CD14-positive monocyte (primary cell): ENCODE measurements at regions of chr16 and their contacts with region 1.

Region 1: GRCh38 chr16:85528528-85529387 is 84.4 kb upstream of the GSE1 start:
- DNase-seq: peak; percentile 23 to 45 (median 32)
- H3K4me3 ChIP-seq: no peak overlapping the region
- H3K4me3 Mint-ChIP-seq: peak overlapping the region; percentile 9 to 42
- H3K27ac ChIP-seq: no peak overlapping the region
- H3K27ac Mint-ChIP-seq: no peak overlapping the region
- H3K4me1 ChIP-seq: peaks cover 20 to 32% of the 10 kb centered on the region in 2 donors
- H3K4me1 Mint-ChIP-seq: peaks cover 23% of the 10 kb centered on the region
- H3K27me3 ChIP-seq: no peaks in the 10 kb centered on the region
- H3K27me3 Mint-ChIP-seq: peaks cover 3 to 5% (median 4%) of the 10 kb centered on the region in 3 donors
- CTCF ChIP-seq: peak; percentile 70

Region 2: GRCh38 chr16:85437166-85438055 is 91.3 kb before region 1 on chr16:
- intact Hi-C with region 1: no loop called
- DNase-seq: peak in 1 of 3 donors; percentile 13
- H3K4me3 ChIP-seq: no peak overlapping the region
- H3K4me3 Mint-ChIP-seq: peak overlapping the region in 1 of 2 donors; percentile 4
- H3K27ac ChIP-seq: no peak overlapping the region
- H3K27ac Mint-ChIP-seq: no peak overlapping the region
- H3K4me1 ChIP-seq: peaks cover 9 to 10% of the 10 kb centered on the region in 2 donors
- H3K4me1 Mint-ChIP-seq: peaks cover 10% of the 10 kb centered on the region
- H3K27me3 ChIP-seq: no peaks in the 10 kb centered on the region
- H3K27me3 Mint-ChIP-seq: peaks cover 2 to 6% (median 4%) of the 10 kb centered on the region in 3 donors
- CTCF ChIP-seq: no peak

Region 3: DNA sequence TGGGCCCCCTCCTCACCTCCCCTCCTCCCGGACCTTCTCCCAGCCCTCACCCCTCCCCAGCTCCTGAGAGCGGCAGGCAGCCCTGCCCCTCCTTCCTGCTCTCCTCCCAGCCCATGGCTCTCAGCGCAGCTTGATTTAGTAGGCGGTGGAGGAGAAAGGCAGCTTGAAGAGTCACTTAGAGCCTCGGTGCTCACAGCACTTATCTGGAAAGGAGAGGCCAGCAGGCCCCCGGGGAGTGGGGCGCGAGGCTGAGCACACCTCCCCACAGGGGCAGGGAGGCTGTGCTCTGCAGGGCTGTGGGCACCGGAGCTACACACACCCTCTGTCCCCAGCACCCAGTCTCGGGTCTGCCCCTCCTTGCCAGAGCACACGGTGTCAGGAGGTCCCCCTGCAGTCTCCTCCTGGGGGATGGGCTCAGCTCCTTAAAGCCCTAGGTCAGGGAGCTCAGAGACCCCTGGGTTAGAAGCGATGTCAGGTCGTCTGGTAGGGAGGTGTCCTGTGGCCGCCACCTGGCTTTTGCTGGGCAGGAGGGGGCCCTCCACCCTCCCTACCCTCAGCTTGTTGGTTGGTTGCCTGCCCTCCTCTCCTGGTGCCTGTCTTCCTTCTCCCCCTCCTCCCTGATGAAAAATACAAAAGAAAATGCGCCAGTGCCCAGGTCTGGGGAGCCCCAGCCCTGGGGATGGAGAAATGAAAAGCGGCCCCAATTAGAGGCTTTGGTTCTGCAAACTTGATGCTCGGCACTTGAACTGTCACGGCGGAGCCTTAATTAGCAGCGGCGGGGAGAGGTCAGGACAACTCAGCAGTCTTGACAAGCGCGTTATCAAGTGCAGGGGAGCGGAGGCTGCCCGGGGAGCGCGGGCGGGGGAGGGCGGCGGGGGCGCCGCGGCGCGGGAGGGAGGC is 66.7 kb before region 1 on chr16:
- intact Hi-C with region 1: no loop called
- DNase-seq: peak in 2 of 3 donors; percentile 8 to 11
- H3K4me3 ChIP-seq: no peak overlapping the region
- H3K4me3 Mint-ChIP-seq: peak overlapping the region; percentile 35 to 69
- H3K27ac ChIP-seq: no peak overlapping the region
- H3K27ac Mint-ChIP-seq: no peak overlapping the region
- H3K4me1 ChIP-seq: peaks cover 3 to 9% of the 10 kb centered on the region in 2 donors
- H3K4me1 Mint-ChIP-seq: peaks cover 9% of the 10 kb centered on the region
- H3K27me3 ChIP-seq: peaks cover 13 to 49% of the 10 kb centered on the region in 2 donors
- H3K27me3 Mint-ChIP-seq: peaks cover 40 to 59% (median 50%) of the 10 kb centered on the region in 3 donors
- CTCF ChIP-seq: no peak

Region 4: GRCh38 chr16:85569615-85570212 is 41.0 kb after region 1 on chr16:
- intact Hi-C with region 1: loop called in 1 of 2 experiments (anchors 5 kb)
- DNase-seq: peak in 2 of 3 donors; percentile 17 to 20
- H3K4me3 ChIP-seq: peak overlapping the region in 1 of 3 experiments; percentile 58
- H3K4me3 Mint-ChIP-seq: peak overlapping the region; percentile 70 to 80
- H3K27ac ChIP-seq: peak overlapping the region; percentile 85 to 94
- H3K27ac Mint-ChIP-seq: peak overlapping the region; percentile 94 to 97 (median 95)
- H3K4me1 ChIP-seq: peaks cover 77 to 89% of the 10 kb centered on the region in 2 donors
- H3K4me1 Mint-ChIP-seq: peaks cover 93% of the 10 kb centered on the region
- H3K27me3 ChIP-seq: no peaks in the 10 kb centered on the region
- H3K27me3 Mint-ChIP-seq: peaks cover 1 to 3% (median 2%) of the 10 kb centered on the region in 3 donors
- CTCF ChIP-seq: no peak

Region 5: GRCh38 chr16:85986931-85987749 is 458.4 kb after region 1 on chr16:
- intact Hi-C with region 1: no loop called
- DNase-seq: peak in 2 of 3 donors; percentile 32 to 47
- H3K4me3 ChIP-seq: peak overlapping the region in 1 of 3 experiments; percentile 1
- H3K4me3 Mint-ChIP-seq: peak overlapping the region in 1 of 2 donors; percentile 12
- H3K27ac ChIP-seq: peak overlapping the region in 1 of 2 donors; percentile 3
- H3K27ac Mint-ChIP-seq: peak overlapping the region; percentile 9 to 99 (median 82)
- H3K4me1 ChIP-seq: peaks cover 54 to 56% of the 10 kb centered on the region in 2 donors
- H3K4me1 Mint-ChIP-seq: peaks cover 57% of the 10 kb centered on the region
- H3K27me3 ChIP-seq: no peaks in the 10 kb centered on the region
- H3K27me3 Mint-ChIP-seq: peaks cover 0 to 5% (median 3%) of the 10 kb centered on the region in 3 donors
- CTCF ChIP-seq: peak; percentile 74